Heart right ventricle (tissue), 16 donors: ENCODE measurements at regions of chr14 and their contacts with region 1.

Region 1: GRCh38 chr14:52131640-52132320 is 62.9 kb upstream of the NID2 start:
- DNase-seq: peak; percentile 54 to 96
- ATAC-seq: peak; percentile 91 to 98 (median 96)
- H3K4me3 ChIP-seq: no peak overlapping the region
- H3K27ac ChIP-seq: peak overlapping the region in 4 of 10 donors; percentile 8 to 35 (median 30)
- H3K4me1 ChIP-seq: peaks cover 0 to 24% (median 7%) of the 10 kb centered on the region in 9 donors
- H3K27me3 ChIP-seq: no peaks in the 10 kb centered on the region
- CTCF ChIP-seq: peak; percentile 59 to 92 (median 82)

Region 2: DNA sequence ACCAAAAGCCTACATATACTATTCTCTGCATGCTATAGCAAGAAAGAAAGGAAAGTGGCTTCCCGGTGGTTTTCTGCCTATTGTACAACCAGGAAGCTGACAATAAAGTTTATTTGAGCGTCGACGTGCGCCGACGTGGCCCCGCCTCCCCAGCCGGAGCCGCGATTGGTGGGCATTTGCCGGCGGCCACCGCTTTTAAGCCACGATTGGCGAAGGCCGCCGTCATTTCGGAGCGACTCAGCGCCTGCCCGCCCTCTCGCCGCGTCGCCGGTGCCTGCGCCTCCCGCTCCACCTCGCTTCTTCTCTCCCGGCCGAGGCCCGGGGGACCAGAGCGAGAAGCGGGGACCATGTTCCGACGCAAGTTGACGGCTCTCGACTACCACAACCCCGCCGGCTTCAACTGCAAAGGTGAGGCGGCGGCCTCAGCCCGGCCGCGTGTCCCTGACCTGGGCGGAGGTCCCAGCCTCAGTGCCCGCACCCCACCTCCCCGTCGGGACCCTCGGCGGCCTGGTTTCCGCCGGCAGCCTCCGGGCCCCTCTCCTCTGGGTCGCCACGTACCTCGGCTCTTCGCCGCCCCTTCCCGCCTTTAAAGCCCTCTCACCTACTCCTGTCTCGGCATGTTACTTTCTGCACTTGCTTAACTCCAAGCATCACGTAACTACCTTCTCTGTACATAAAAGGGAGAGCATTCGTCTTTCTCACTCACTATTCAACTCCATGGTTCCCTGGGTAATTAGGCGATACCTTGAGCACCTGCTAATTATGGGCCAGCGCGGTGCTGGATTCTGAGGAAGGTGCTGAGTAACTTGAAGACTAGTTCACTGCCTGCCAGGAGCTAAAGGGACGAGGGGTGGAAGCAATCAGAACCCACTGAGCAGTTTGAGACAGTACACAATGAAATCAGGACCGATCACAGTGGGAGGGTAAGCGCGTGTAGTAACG is 142.2 kb before region 1 on chr14 and contains the start of gene RTRAF:
- intact Hi-C with region 1: loop called in 3 of 10 experiments (anchors 2 to 5 kb)
- DNase-seq: peak; percentile 95
- ATAC-seq: peak; percentile 98 to 100 (median 99)
- H3K4me3 ChIP-seq: peak within 1 kb of the TSS; percentile 80 to 96 (median 93)
- H3K27ac ChIP-seq: peak within 1 kb of the TSS; percentile 82 to 96 (median 91)
- H3K4me1 ChIP-seq: peaks cover 0 to 53% (median 46%) of the 10 kb centered on the region in 9 donors
- H3K27me3 ChIP-seq: no peaks in the 10 kb centered on the region
- CTCF ChIP-seq: no peak
- total RNA-seq, gene RTRAF: 181 to 258 (median 214) TPM

Region 3: DNA sequence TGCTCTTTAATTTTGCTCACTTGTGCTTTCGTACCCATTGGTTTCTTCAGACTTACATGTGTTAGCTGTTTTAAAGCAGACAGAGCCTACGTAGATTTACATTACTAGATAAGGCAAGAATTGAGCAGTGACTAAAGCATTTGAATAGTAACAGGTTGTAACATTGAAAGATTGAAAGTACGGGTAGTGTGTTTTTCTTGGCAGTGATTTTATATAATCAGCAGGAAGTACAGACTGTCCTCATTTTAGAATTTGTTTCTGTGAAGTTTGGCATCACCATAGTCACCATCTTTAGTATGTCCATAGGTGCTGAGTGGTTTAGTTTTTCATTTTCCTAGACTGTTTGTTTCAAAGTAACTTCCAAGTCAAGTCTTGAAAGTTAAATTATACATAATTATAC is 128.5 kb before region 1 on chr14:
- intact Hi-C with region 1: loop called in 5 of 10 experiments (anchors 5 kb)
- DNase-seq: no peak
- ATAC-seq: peak in 7 of 8 donors; percentile 23 to 91 (median 75)
- H3K4me3 ChIP-seq: no peak overlapping the region
- H3K27ac ChIP-seq: peak overlapping the region in 9 of 10 donors; percentile 34 to 66 (median 56)
- H3K4me1 ChIP-seq: peaks cover 0 to 62% (median 28%) of the 10 kb centered on the region in 9 donors
- H3K27me3 ChIP-seq: no peaks in the 10 kb centered on the region
- CTCF ChIP-seq: no peak

Region 4: DNA sequence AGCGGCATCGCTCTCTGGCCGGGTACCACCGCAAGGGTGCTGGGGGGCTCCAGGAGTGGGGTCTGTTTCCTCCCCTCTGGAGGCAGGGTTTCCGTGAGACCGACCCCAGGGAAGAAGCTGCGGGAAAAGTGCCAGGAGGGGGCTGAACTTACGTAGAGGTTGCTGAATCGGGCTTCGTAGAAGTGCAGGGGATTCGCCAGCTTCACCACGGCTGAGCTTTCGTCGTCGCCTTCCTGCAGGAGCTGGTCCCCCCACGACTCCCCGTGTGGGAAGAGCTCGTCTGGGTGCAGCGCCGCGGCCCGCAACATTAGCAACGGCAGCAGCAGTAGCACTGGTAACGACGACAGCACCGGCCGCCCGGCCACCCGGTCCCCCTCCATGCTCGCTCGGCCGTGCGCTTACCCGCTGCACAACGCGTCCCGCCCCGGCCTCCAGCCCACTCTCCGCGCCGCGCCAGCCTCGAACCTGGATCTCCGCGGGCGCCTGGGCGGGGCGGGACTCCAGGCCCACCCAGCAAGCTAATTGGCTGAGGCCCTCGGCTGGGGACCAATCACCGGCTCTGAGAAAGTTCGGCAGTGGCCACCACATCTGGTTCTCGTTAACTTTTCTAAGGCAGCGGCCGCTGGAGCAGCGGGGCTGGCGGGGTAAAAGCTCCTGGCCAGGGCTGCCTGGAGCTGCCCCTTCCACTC is 63.0 kb before region 1 on chr14 and contains the start of gene NID2:
- intact Hi-C with region 1: loop called in 3 of 10 experiments (anchors 2 to 5 kb)
- DNase-seq: peak; percentile 90
- ATAC-seq: peak; percentile 93 to 96 (median 94)
- H3K4me3 ChIP-seq: peak within 1 kb of the TSS; percentile 51 to 96 (median 76)
- H3K27ac ChIP-seq: peak within 1 kb of the TSS; percentile 67 to 92 (median 90)
- H3K4me1 ChIP-seq: peaks cover 0 to 62% (median 50%) of the 10 kb centered on the region in 9 donors
- H3K27me3 ChIP-seq: peaks cover 0 to 54% (median 0%) of the 10 kb centered on the region in 7 donors
- CTCF ChIP-seq: peak in 2 of 9 donors; percentile 14 to 27
- total RNA-seq, gene NID2: 26.6 to 66.0 (median 39.2) TPM

Region 5: GRCh38 chr14:52272375-52272774 is 140.6 kb after region 1 on chr14:
- intact Hi-C with region 1: loop called in 1 of 10 experiments (anchors 10 kb)
- DNase-seq: no peak
- ATAC-seq: no peak
- H3K4me3 ChIP-seq: no peak overlapping the region
- H3K27ac ChIP-seq: no peak overlapping the region
- H3K4me1 ChIP-seq: peaks cover 0 to 26% (median 15%) of the 10 kb centered on the region in 9 donors
- H3K27me3 ChIP-seq: peaks cover 0 to 35% (median 12%) of the 10 kb centered on the region in 7 donors
- CTCF ChIP-seq: peak in 2 of 9 donors; percentile 19 to 32